ENCODE measurements at regions of chr9 and their contacts with region 1.

Region 1: DNA sequence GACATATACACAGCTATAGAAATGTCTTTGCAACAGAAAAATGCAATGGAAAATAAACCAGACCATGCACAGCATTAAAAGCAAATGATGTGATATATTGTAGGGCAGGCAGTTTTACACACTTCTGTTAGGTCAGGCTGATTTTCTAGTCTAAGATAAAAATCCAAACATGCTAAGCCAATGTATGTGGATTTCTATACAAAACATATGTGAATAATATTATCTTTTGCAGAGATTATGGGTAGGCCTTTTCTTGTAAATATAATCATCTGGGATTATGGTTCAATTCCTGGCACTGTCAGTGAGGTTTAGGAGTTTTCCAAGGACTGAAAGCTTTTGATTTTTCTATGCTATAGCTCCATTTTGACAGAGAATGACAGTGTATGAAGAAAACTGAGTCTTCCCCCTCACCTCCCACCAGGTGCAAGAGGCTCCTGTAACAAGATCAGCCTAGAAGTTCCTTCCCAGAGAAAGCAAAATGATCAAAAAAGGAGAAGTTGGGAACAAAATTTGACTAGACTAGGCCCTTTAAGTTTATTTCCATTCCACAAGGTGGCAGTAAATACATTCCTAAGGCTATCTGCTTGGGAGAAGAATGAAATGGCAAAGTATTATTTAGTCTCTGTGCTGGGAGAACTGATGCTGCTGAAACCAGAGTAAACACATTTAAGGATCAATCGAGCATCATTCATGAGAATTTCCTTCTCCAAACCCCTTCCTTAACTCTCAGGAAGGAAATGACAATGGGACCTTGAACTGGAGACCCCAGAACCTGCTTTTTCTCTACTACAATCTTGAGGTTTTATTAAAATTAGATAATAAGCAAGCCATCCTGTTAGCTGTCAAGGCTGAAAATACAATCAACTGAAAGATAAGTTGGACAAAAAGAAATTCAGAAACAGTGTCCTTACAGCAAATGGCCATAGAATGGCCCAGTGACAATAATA is 133.0 kb upstream of the TUT7 start:
- DNase-seq: peak in 1 of 5 donors; percentile 4
- H3K4me3 ChIP-seq: no peak overlapping the region
- H3K4me3 Mint-ChIP-seq: no peak overlapping the region
- H3K27ac ChIP-seq: no peak overlapping the region
- H3K27ac Mint-ChIP-seq: no peak overlapping the region
- H3K4me1 ChIP-seq: no peaks in the 10 kb centered on the region
- H3K4me1 Mint-ChIP-seq: peaks cover 0 to 5% (median 2%) of the 10 kb centered on the region in 4 donors
- H3K27me3 ChIP-seq: no peaks in the 10 kb centered on the region
- H3K27me3 Mint-ChIP-seq: peaks cover 2 to 3% of the 10 kb centered on the region in 2 donors

Region 2: DNA sequence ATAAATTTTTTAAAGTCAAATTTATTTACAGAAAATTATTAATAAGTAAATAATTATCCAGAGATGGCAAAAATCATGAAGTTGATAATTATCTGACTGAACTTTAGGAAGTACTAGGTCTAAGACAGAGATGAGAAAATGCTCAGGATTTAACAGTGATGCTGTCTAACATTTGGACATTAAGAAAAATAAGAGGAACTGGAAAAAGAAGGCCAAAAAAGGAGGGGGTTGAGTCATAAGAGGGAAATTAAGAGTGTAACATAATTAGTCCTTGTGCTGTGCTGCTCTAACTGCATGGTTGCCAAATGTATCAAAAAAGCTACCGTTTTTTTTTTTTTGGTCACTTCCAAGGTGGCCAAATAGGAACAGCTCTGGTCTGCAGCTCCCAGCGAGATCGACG is 97.5 kb before region 1 on chr9:
- CTCF ChIA-PET with region 1: no interaction called
- POLR2A ChIA-PET with region 1: no interaction called
- intact Hi-C with region 1: no loop called
- DNase-seq: no peak
- H3K4me3 ChIP-seq: no peak overlapping the region
- H3K4me3 Mint-ChIP-seq: no peak overlapping the region
- H3K27ac ChIP-seq: no peak overlapping the region
- H3K27ac Mint-ChIP-seq: no peak overlapping the region
- H3K4me1 ChIP-seq: no peaks in the 10 kb centered on the region
- H3K4me1 Mint-ChIP-seq: no peaks in the 10 kb centered on the region
- H3K27me3 ChIP-seq: no peaks in the 10 kb centered on the region
- H3K27me3 Mint-ChIP-seq: peaks cover 26 to 44% of the 10 kb centered on the region in 2 donors

Region 3: DNA sequence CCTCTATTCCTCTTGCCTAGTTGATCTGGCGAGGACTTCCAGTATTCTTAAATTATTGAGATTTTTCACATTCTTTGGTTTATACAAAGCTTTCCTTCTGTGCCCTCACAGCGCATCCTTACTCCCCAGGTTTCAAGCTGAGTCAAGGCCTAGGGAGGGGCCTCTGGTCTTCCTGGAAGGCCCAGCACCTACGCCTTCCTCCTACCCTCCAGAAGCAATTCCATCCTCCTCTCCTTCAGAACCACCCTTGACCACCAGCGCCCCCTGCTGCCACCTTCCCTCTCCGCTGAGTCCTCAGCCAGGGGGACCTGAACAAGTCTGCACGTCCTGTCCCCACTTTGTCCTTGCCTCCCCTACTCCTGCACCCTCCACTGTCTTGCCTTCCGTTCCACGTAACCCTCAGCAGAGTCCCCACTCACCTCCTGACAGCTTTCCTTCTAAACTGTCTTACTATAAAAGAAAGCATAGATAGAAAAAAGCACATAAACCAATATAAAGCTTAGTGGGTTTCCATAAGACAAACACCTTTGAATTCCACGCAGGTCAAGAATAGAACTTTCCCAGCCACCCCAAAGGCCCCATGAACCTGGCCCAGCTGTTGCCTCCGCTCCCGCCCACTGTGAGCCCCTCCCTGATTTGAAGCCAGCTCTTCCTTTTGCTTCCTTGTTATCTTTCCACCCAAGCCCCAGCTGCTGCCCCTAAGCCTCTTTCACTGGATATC is 1175.8 kb after region 1 on chr9:
- CTCF ChIA-PET with region 1: no interaction called
- POLR2A ChIA-PET with region 1: no interaction called
- intact Hi-C with region 1: loop called (anchors 5 kb)
- DNase-seq: peak in 1 of 5 donors; percentile 6
- H3K4me3 ChIP-seq: no peak overlapping the region
- H3K4me3 Mint-ChIP-seq: no peak overlapping the region
- H3K27ac ChIP-seq: no peak overlapping the region
- H3K27ac Mint-ChIP-seq: no peak overlapping the region
- H3K4me1 ChIP-seq: no peaks in the 10 kb centered on the region
- H3K4me1 Mint-ChIP-seq: peaks cover 0 to 1% (median 0%) of the 10 kb centered on the region in 4 donors
- H3K27me3 ChIP-seq: no peaks in the 10 kb centered on the region
- H3K27me3 Mint-ChIP-seq: peaks cover 7 to 11% of the 10 kb centered on the region in 2 donors